Posterior vena cava (tissue), 2 donors: ENCODE measurements at regions of chr3 and their contacts with region 1.

Region 1: GRCh38 chr3:138186803-138187295 is 252 bp upstream of the ARMC8 start:
- DNase-seq: peak; percentile 96

Region 2: DNA sequence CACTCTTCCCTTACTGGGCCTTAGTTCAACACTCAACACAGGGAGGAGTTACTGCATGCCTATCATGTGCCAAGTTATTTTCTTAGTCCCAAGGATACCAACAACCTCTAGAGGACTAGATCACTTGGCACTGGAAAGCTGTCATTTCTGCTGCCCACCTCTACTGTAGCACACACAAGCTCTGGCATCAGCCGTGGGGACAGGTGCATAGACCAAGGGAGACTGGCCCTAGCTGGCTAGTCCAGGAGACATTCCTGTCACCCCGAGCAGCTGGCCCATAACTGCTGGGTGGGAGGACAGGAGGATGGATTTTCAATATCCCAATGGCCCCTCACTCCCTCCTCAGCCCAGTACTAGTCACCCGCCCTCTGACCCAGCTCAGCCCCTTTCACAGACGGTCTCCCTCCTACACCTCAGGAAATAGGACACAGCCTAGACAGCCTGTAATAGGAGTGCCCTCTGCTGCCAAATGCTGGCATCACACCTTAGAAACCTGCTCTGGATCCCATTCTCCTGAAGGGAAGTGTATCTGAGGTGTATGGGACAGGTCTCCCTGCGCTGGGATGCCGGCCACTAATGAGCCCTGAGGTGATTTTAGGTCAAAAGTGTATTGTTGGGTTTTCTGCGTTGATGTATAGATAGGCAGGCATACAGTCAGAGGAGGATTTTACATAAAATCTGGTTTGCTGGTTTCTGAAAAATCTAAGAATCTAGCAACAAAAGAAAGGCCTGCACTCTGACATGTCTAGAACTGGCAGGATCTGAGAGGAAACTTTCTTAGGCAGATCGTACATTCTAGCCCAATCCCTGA is 68.0 kb before region 1 on chr3:
- intact Hi-C with region 1: loop called in 1 of 2 experiments (anchors 10 kb)
- DNase-seq: peak; percentile 88

Region 3: DNA sequence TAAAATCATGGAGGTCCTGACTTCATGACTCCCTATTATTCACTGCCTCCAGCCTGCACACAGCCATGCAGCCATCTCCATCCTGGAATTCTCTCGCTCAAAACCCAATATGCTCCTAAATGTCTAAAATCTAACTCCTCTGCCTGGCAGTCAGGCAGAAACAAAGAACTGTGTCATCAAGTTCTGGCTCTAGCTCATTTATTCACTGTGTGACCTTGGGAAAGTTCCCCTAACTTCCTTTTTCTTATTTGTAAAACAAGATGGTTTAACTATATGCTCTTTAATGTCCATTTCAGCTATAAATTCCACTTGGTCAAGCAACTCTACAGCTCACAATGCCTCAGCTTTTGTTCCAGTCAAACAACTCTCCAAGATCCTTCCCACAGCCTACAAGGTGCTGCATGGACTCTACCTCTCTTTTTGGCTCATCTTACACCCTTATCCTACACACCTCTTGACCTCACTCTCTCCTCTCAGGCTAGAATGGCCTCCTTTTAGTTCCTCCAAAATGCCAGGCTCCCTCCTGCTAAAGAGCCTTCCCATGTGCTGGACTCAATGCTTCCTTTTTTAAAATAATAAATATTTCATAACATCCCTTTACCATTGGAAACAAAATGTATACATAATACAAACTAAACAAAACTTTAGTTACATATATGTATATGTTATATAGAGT is 631.5 kb after region 1 on chr3:
- intact Hi-C with region 1: no loop called
- DNase-seq: no peak